HEK293 (cell line): ENCODE measurements at regions of chr9 and their contacts with region 1.

Region 1: DNA sequence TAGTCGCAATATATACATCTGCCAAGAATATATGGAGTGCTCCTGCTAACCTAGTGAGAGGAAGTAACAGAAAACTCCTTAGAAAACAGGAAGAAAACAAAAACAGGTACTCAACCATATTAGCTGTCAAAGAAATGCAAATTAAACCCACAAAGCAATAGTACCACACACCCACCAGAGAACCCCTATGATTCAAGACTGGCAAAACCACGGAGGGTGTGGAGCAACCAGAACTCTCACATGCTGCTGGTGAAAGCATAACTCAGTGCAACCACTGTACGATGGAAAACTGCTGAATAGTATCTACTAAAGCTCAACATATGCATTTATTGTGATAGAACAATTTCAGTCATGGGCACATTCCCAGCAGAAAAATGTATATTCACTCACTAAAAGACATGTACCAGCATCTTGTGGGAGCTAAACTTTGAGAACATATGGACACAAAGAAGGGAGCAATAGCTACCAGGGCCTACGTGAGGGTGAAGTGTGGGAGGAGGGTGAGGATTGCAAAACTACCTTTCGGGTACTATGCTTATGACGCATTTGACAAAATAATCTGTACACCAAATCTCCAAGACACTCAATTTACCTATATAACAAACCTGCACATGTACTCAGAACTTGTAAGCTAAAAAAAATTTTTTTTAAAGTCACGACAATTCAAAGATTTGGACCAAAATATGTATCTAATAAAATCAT is 34.0 kb downstream of the PTPN3 start:
- H3K4me3 ChIP-seq: no peak overlapping the region
- H3K27ac ChIP-seq: no peak overlapping the region
- H3K4me1 ChIP-seq: no peaks in the 10 kb centered on the region
- CTCF ChIP-seq: no peak

Region 2: DNA sequence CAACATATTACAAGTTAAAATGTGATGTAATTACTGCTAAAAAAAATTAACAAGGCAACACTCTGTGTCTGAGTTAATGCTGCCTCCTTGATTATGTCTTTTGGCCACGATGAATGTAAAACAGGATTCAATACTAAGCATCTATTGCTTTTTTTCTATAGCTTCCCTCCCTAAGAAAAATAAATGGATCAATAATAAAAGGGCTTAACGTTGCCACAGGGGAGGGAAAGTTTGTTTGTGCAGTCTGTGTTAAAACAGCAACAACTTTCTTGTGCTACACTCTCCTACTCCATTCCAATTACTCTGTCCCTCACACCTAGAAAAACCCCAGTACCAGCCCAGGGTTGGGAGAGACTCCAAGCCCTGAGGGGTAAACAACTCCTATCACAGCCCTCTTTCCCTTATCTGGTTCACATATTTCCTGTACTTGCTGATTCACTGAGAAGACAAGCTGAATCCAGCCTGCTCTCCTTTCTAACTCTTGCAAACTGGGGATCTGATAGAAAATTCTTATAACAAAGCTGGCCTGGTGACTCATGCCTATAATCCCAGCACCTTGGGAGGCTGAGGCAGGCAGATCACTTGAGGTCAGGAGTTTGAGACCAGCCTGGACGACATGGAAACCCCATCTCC is 10.7 kb before region 1 on chr9:
- CTCF ChIA-PET with region 1: interaction called, 36 read pairs
- POLR2A ChIA-PET with region 1: no interaction called
- H3K4me3 ChIP-seq: no peak overlapping the region
- H3K27ac ChIP-seq: no peak overlapping the region
- H3K4me1 ChIP-seq: 0 out of 2 replicates have a peak, but pooled peaks cover 3% of the 10 kb centered on the region
- CTCF ChIP-seq: no peak

Region 3: GRCh38 chr9:109779711-109780452 is 315.8 kb after region 1 on chr9 and contains the start of gene PALM2AKAP2:
- CTCF ChIA-PET with region 1: no interaction called
- POLR2A ChIA-PET with region 1: no interaction called
- H3K4me3 ChIP-seq: peak within 1 kb of the TSS; percentile 68
- H3K27ac ChIP-seq: peak within 1 kb of the TSS; percentile 76; the same call in 1 of the 2 replicates
- H3K4me1 ChIP-seq: no peaks in the 10 kb centered on the region; the same call in 1 of the 2 replicates
- CTCF ChIP-seq: peak; percentile 24; the same call in 1 of the 2 replicates